Activated naive CD4-positive, alpha-beta T cell treated with anti-CD3 and anti-CD28 coated beads for 36 hours (primary cell): ENCODE measurements at regions of chr12 and their contacts with region 1.

Region 1: GRCh38 chr12:68040450-68041075 is 51.3 kb downstream of the IFNG-AS1 start:
- DNase-seq: peak; percentile 83
- H3K4me3 Mint-ChIP-seq: no peak overlapping the region
- H3K27ac Mint-ChIP-seq: peak overlapping the region; percentile 29
- H3K4me1 Mint-ChIP-seq: peaks cover 42% of the 10 kb centered on the region
- H3K27me3 Mint-ChIP-seq: no peaks in the 10 kb centered on the region

Region 2: DNA sequence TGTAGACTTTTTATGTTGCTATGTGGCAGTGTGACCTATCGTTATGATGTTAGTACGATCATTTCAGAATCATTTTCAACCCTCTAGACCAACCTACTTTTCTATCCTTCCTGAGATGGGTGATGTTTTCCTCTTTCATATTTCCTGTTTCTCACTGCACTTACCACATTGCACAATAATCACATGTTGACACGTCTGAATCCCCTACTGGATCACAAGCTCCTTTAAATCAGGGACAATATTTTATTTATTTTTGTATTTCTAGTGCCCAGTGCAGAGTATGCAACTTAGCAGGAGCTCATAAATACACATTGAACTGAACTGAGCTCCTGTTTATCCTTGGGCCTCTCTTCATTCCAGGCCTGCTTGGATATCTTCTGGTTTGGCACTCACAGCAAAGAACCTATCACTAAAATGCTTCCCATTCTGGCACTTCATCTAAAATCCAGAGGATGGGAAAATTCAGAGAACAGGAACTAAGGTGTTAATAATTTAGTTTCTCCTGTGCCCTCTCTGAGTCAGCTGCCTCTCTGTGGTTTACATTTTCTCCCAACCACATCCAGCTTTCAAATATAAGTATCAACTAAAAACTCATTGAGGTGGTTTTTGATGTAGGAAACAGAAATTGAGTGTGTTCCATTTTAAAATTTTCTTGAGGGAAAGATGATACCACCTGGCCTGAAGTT is 461.4 kb before region 1 on chr12:
- CTCF ChIA-PET with region 1: no interaction called
- intact Hi-C with region 1: no loop called
- DNase-seq: peak; percentile 31
- H3K4me3 Mint-ChIP-seq: no peak overlapping the region
- H3K27ac Mint-ChIP-seq: no peak overlapping the region
- H3K4me1 Mint-ChIP-seq: peaks cover 38% of the 10 kb centered on the region
- H3K27me3 Mint-ChIP-seq: peaks cover 3% of the 10 kb centered on the region

Region 3: GRCh38 chr12:67991158-67991557 is 49.4 kb before region 1 on chr12:
- CTCF ChIA-PET with region 1: interaction called, 5 read pairs
- intact Hi-C with region 1: loop called (anchors 2 kb)
- DNase-seq: peak; percentile 74
- H3K4me3 Mint-ChIP-seq: peak overlapping the region; percentile 55
- H3K27ac Mint-ChIP-seq: peak overlapping the region; percentile 80
- H3K4me1 Mint-ChIP-seq: peaks cover 49% of the 10 kb centered on the region
- H3K27me3 Mint-ChIP-seq: peaks cover 2% of the 10 kb centered on the region

Region 4: DNA sequence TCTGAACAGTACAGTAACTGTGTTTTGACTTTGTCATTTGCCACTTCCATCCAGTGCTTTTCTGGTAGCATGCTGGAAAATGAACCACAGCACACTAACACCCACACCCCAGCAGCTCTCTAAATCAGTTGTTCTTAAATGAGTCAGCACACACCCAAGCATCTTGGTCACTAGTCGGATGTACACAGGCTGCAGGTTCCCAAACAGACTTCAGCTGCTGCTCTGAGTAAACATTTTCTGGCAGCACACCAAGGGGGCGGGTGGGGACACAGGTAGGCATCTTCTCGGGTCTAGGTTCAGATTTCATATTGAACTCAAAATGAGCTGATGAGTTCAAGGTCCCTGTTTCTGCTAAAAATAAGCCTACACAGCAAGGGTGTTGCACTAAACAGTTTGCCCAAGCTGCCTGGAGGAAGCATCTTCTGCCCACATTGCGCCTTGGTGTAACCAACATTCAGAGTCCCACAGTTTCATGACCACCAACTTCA is 79.2 kb after region 1 on chr12:
- CTCF ChIA-PET with region 1: interaction called, 4 read pairs
- intact Hi-C with region 1: loop called (anchors 1 kb)
- DNase-seq: peak; percentile 83
- H3K4me3 Mint-ChIP-seq: no peak overlapping the region
- H3K27ac Mint-ChIP-seq: peak overlapping the region; percentile 43
- H3K4me1 Mint-ChIP-seq: peaks cover 33% of the 10 kb centered on the region
- H3K27me3 Mint-ChIP-seq: no peaks in the 10 kb centered on the region

Region 5: DNA sequence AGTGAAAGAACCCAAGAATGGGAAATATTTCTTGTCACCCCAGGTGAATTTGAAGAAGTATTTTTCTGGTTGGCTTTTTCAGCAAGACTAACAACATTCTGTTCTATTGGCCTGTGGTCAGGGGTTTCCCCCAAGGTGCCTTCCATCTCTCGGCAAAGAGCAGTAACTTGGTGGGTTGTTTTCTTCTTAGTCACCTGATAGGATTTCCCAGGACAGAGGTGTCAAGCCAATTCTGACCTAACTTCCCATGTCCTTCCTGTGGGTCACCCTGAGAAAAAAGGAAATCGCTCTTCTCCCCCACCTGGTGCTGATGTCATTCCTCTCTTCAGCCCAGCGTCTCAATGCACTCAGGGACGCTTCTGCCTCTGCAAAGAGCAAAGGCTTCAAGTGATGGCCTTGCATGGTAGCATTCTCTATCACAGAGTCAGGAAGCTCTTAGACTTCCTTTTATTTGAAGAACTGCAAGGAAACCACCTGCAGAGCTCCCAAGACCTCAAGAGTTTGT is 135.0 kb after region 1 on chr12:
- CTCF ChIA-PET with region 1: interaction called, 17 read pairs
- intact Hi-C with region 1: loop called (anchors 5 kb)
- DNase-seq: peak; percentile 87
- H3K4me3 Mint-ChIP-seq: peak overlapping the region; percentile 62
- H3K27ac Mint-ChIP-seq: peak overlapping the region; percentile 89
- H3K4me1 Mint-ChIP-seq: peaks cover 78% of the 10 kb centered on the region
- H3K27me3 Mint-ChIP-seq: no peaks in the 10 kb centered on the region

Region 6: DNA sequence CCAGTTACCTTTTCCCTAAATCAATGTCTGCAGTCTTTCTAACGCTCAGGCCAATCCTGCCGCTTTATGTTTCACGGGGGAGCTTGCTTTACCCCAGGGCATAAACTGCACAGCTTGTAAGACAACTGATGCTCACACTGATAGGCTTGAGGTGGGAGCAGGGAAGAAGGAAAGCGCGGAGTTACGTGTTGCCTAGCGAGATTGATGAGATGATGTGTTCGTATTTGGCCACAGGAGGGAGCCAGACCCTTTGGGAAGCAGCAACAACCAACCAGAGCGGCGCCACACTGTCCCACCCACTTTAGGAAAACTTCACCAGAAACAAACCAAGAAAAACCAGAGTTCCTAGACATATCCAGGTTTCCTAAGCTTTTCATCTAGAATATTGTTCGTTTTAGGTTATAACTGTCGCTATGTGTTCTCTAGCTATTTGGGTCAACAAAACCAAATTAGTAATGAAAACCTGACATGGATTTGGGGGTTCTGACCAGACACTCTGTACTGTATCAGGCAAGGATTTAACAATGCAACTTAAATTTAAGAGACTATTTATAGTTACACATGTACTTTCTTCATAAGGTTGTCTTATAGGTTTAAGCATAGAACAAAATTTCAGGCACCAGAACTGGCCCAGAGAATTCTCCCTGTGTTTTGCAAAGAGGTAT is 182.7 kb after region 1 on chr12:
- CTCF ChIA-PET with region 1: interaction called, 38 read pairs
- intact Hi-C with region 1: loop called (anchors 1 kb)
- DNase-seq: peak; percentile 88
- H3K4me3 Mint-ChIP-seq: peak overlapping the region; percentile 46
- H3K27ac Mint-ChIP-seq: no peak overlapping the region
- H3K4me1 Mint-ChIP-seq: peaks cover 6% of the 10 kb centered on the region
- H3K27me3 Mint-ChIP-seq: no peaks in the 10 kb centered on the region

Region 7: GRCh38 chr12:69059483-69060457 is 1019.2 kb after region 1 on chr12:
- CTCF ChIA-PET with region 1: no interaction called
- intact Hi-C with region 1: loop called (anchors 10 kb)
- DNase-seq: peak; percentile 37
- H3K4me3 Mint-ChIP-seq: no peak overlapping the region
- H3K27ac Mint-ChIP-seq: peak overlapping the region; percentile 81
- H3K4me1 Mint-ChIP-seq: peaks cover 49% of the 10 kb centered on the region
- H3K27me3 Mint-ChIP-seq: no peaks in the 10 kb centered on the region